HEK293T (cell line): ENCODE measurements at regions of chr1 and their contacts with region 1.

Region 1: GRCh38 chr1:43934101-43934985 is 742 bp downstream of the ARTN start:
- DNase-seq: peak; percentile 75

Region 2: DNA sequence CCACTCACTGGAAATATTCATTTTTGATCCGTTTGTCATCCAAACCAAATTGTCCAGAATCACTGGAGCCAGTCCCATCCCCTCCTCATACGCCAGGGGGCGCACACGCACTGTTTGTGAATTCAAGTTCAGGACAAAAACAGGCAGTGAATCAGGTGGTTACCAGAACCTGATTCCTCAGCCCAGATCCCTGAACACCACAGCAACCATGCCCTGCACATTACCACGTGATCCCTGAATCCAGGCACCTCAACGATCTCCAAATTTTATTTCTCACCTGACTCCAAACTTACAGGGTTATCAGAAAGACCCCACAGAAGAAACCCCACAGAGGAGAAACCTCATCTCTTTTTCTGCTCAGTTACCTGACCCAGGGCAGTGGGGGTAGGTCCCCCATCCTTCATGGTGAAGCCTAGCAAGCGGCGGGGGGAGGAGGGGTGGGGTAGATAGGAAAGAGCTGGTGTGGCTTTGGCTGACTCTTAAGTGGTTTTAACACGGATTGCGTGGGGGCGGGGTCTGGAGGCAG is 405.1 kb before region 1 on chr1:
- CTCF ChIA-PET with region 1: interaction called, 15 read pairs
- POLR2A ChIA-PET with region 1: no interaction called
- DNase-seq: peak; percentile 85

Region 3: GRCh38 chr1:43763497-43763973 is 170.8 kb before region 1 on chr1:
- CTCF ChIA-PET with region 1: interaction called, 127 read pairs
- POLR2A ChIA-PET with region 1: interaction called, 8 read pairs
- DNase-seq: peak; percentile 76

Region 4: GRCh38 chr1:43946236-43947060 is 12.1 kb after region 1 on chr1 and contains the start of gene IPO13:
- CTCF ChIA-PET with region 1: interaction called, 33 read pairs
- POLR2A ChIA-PET with region 1: interaction called, 7 read pairs
- DNase-seq: peak; percentile 97

Region 5: DNA sequence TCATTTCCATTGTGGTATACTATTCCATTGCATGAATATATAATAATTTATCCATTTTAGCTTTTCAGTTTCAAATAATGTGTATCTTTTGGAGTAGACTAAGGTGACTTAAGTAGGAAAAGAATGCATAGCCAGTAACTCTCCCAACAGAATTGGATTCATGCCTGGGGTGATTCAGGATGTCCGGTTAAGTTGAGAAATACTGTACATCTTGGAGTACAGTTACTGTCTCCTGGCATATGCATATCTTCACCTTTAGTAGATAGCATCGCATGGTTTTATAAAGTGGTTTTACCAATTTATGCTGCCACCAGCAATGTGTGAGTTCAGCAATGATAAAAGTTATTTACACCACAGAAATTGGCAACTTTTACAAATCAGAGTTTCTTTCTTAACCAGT is 115.5 kb after region 1 on chr1:
- CTCF ChIA-PET with region 1: interaction called, 18 read pairs
- POLR2A ChIA-PET with region 1: no interaction called
- DNase-seq: no peak